Brain microvascular endothelial cell (primary cell): ENCODE measurements at regions of chr10 and their contacts with region 1.

Region 1: GRCh38 chr10:110336111-110336721 is 31.5 kb upstream of the SMNDC1 start:
- DNase-seq: peak; percentile 90
- H3K4me3 ChIP-seq: no peak overlapping the region
- H3K27ac ChIP-seq: peak overlapping the region; percentile 71
- H3K27me3 ChIP-seq: no peaks in the 10 kb centered on the region
- CTCF ChIP-seq: peak; percentile 44

Region 2: DNA sequence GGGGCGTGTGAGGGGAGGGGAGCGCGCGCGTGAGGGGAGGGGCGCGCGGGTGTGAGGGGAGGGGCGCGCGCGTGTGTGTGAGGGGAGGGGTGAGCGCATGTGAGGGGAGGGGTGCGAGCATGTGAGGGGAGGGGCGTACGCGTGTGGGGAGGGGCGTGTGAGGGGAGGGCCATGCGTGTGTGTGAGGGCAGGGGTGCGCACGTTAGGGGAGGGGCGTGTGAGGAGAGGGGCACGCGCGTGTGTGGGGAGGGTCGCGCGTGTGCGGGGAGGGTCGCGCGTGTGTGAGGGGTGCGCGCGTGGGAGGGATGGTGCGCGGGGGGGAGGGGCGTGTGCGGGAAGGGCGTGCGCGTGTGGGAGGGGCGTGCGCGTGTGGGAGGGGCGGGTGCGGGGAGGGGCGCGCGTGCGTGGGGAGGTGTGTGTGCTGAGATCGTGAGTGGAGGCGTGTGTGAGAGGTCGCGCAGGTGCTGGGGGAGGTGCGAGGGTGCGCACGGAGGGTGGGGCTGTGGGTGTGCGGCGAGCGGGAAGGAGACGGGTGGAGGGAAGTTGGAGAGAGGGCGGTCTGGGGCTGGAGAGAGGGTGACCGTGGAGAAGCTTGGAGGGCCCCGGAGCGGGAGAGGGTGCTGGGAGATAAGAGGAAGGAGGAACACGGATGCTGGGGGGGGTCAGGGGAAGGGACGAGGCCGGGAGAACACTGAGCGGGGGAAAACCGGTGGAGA is 109.1 kb before region 1 on chr10:
- in situ Hi-C with region 1: no loop called
- DNase-seq: no peak
- H3K4me3 ChIP-seq: peak overlapping the region; percentile 81
- H3K27ac ChIP-seq: no peak overlapping the region
- H3K27me3 ChIP-seq: no peaks in the 10 kb centered on the region
- CTCF ChIP-seq: no peak

Region 3: DNA sequence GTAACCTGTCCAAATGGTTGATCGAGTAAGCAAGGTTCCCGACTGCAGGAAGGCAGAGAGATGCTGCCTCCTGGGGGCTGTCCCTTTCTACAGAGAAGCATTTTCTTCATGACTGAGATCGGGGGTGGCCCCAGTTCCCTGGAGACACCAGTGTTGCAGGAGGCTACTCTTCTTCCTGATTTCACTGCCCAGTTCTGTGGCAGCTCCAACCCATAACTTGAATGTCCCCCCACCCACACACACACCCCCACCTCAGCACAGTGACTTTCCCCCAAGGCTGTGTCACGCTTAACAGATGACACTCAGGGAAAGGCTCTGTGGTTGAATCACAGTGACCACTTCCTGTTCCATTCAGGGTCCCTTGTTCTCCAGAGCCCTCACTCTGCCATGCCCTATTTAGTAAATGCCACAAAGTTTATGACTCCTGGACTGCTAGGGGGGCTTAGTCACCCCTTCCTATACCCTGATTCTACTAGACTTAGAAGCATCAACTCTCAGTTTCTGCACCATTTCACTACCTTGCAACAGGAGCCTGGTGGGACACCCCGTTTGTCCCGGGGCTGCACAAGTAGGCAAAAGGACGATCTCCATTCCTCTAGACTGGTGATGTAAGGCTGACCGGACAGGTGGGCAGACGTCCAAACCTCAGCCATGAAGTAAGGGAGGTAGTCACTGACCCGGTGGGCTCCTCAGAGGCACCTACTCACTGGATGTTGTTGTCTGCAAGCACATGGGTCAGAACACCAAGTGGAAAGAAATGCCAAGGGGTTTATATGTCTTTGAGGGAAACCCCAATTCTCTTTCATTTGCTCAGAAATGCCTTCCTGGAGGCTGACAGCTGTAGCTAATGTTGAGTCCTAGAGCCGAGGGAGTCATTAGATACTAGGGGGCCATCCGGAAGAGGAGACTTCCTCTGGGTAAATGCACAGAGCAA is 200.0 kb after region 1 on chr10:
- in situ Hi-C with region 1: loop called (anchors 25 kb)
- DNase-seq: peak; percentile 73
- H3K4me3 ChIP-seq: peak overlapping the region; percentile 0
- H3K27ac ChIP-seq: peak overlapping the region; percentile 25
- H3K27me3 ChIP-seq: no peaks in the 10 kb centered on the region
- CTCF ChIP-seq: peak; percentile 65